Mammary epithelial cell (primary cell): ENCODE measurements at regions of chr21 and their contacts with region 1.

Region 1: DNA sequence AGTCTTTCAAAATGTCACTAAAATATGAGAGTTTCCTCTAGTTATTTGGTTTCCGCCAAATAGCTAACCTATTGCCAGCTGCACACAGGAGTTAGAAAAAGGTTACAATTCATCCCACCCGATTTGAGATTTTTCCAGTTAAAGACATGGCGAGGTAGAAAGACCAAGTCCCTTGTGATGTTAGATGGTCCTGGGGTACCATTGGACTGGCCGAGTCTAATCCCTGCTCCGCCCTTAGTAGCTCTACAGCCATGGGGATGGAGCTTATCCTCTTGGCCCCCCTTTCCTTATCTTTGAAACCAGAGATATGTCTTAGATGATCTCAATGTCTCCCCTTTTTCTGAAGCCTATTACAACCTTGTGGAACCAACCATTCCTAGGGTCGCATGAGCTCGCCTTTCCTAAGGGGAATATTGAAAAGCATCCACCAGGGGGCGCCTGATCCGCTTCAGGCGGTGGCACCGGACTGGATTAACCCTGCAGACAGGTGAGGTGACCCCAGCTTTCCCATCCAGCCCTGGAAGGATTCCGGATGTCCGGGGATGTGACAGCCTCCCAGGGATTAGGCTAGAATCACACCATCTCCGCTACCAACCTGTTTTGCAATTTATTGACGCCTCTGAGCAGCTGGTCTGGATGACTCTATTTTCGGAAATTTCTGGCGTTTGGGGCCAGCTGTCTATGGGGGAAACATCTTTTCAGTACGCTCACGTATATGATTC is 68.3 kb upstream of the SIM2 start:
- DNase-seq: peak; percentile 12
- H3K4me3 ChIP-seq: no peak overlapping the region
- H3K27ac ChIP-seq: no peak overlapping the region
- H3K4me1 ChIP-seq: peaks cover 3% of the 10 kb centered on the region
- H3K27me3 ChIP-seq: peaks cover 2% of the 10 kb centered on the region
- CTCF ChIP-seq: peak; percentile 67 to 74

Region 2: DNA sequence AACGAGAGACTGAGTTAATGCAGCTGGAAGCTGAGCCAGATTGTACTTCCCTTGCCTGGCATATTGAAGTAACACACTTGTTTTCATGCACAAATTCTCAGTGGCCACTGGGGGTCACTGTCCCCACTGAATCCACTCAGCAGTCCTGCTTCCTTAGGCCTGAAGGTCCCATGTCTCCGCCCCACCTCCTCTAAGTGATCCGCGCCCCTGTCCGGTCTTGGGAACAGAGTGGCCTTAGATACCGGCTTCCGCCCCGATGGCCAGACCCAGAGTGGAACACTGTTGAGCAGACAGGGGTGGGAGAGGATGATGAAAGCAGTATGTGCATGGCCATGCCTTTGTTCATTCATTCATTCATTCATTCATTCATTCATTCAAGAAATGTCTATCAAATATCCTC is 210.7 kb before region 1 on chr21:
- CTCF ChIA-PET with region 1: no interaction called
- dilution Hi-C with region 1: no loop called
- in situ Hi-C with region 1: no loop called
- intact Hi-C with region 1: loop called (anchors 2 kb)
- DNase-seq: peak; percentile 66
- H3K4me3 ChIP-seq: no peak overlapping the region
- H3K27ac ChIP-seq: no peak overlapping the region
- H3K4me1 ChIP-seq: no peaks in the 10 kb centered on the region
- H3K27me3 ChIP-seq: no peaks in the 10 kb centered on the region
- CTCF ChIP-seq: peak; percentile 80 to 84

Region 3: DNA sequence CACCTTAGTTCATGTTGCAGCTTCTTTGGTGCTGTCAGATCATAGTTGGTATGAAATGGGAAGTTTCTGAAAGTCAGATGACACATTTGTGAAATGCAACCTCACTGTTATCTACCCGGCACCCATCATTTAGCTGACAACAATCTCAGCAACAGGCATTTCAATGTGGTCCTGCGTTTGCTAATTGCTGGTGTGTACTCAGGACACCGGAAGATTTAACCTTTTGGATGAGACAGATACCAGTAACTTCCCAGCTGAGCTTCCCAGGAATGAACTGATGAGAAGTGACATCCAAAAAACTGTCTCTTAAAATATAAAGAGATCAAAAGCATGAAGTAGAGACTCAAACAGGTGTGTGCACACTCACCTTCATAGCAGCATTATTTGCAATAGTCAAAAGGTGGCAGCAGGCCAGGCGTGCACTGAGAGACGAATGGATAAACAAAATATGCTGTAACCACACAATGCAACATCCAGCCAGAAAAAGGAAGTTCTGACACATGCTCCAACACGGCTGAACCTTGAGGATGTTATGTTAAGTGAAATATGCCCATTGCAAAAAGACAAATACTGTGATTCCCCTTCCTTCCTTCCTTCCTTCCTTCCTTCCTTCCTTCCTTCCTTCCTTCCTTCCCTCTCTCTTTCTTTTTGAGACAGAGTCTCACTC is 142.9 kb before region 1 on chr21:
- CTCF ChIA-PET with region 1: no interaction called
- dilution Hi-C with region 1: no loop called
- in situ Hi-C with region 1: no loop called
- intact Hi-C with region 1: no loop called
- DNase-seq: peak; percentile 87
- H3K4me3 ChIP-seq: no peak overlapping the region
- H3K27ac ChIP-seq: no peak overlapping the region
- H3K4me1 ChIP-seq: no peaks in the 10 kb centered on the region
- H3K27me3 ChIP-seq: no peaks in the 10 kb centered on the region
- CTCF ChIP-seq: no peak

Region 4: GRCh38 chr21:36513430-36513829 is 117.2 kb before region 1 on chr21:
- CTCF ChIA-PET with region 1: no interaction called
- dilution Hi-C with region 1: no loop called
- in situ Hi-C with region 1: no loop called
- intact Hi-C with region 1: no loop called
- DNase-seq: no peak
- H3K4me3 ChIP-seq: no peak overlapping the region
- H3K27ac ChIP-seq: no peak overlapping the region
- H3K4me1 ChIP-seq: peaks cover 7% of the 10 kb centered on the region
- H3K27me3 ChIP-seq: no peaks in the 10 kb centered on the region
- CTCF ChIP-seq: no peak

Region 5: DNA sequence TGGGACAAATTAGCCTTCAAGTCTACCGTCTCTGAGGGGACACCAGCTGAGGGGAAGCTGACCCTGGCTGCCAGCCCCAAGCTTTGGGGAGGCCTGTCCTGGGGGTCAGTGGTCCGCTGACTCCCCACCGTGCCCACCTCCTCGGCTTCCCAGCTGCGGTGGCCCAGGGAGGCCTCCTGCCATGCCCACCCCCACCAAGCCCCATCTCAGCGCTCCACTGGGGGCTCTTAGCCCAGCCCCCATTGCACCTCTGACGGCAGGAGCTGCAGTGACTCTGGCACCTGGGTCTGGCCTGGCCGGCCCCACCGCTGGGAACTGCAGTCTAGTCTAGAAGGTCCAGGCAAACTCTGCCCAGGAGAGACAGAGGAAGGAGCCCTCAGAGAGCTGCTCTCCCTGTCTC is 38.1 kb after region 1 on chr21:
- CTCF ChIA-PET with region 1: no interaction called
- dilution Hi-C with region 1: loop called (anchors 5 kb)
- in situ Hi-C with region 1: no loop called
- intact Hi-C with region 1: no loop called
- DNase-seq: no peak
- H3K4me3 ChIP-seq: no peak overlapping the region
- H3K27ac ChIP-seq: no peak overlapping the region
- H3K4me1 ChIP-seq: no peaks in the 10 kb centered on the region
- H3K27me3 ChIP-seq: peaks cover 4% of the 10 kb centered on the region
- CTCF ChIP-seq: no peak

Region 6: DNA sequence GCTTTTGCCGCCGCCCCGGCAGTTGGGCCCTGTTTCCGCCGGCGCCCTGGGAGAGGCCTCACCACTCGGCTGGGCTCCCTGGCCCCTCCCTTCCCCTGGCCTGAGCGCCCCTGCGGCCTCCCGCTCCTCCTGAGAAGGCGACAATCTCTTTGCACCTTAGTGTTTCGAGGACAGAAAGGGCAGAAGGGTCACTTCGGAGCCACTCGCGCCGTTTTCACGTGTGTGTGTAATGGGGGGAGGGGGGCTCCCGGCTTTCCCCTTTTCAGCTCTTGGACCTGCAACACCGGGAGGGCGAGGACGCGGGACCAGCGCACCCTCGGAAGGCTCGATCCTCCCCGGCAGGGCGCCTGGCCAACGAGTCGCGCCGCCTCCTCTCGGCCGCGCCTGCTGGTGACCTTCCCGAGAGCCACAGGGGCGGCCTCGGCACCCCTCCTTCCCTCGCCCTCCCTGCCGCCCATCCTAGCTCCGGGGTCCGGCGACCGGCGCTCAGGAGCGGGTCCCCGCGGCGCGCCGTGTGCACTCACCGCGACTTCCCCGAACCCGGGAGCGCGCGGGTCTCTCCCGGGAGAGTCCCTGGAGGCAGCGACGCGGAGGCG is 67.8 kb after region 1 on chr21:
- CTCF ChIA-PET with region 1: no interaction called
- dilution Hi-C with region 1: no loop called
- in situ Hi-C with region 1: no loop called
- intact Hi-C with region 1: no loop called
- DNase-seq: no peak
- H3K4me3 ChIP-seq: no peak overlapping the region
- H3K27ac ChIP-seq: no peak overlapping the region
- H3K4me1 ChIP-seq: peaks cover 24% of the 10 kb centered on the region
- H3K27me3 ChIP-seq: peaks cover 93% of the 10 kb centered on the region
- CTCF ChIP-seq: no peak

Region 7: GRCh38 chr21:36719614-36720013 is 89.0 kb after region 1 on chr21:
- CTCF ChIA-PET with region 1: no interaction called
- dilution Hi-C with region 1: loop called (anchors 5 kb)
- in situ Hi-C with region 1: no loop called
- intact Hi-C with region 1: no loop called
- DNase-seq: no peak
- H3K4me3 ChIP-seq: no peak overlapping the region
- H3K27ac ChIP-seq: peak overlapping the region; percentile 48
- H3K4me1 ChIP-seq: peaks cover 12% of the 10 kb centered on the region
- H3K27me3 ChIP-seq: no peaks in the 10 kb centered on the region
- CTCF ChIP-seq: no peak

Region 8: GRCh38 chr21:36854391-36854790 is 223.7 kb after region 1 on chr21:
- CTCF ChIA-PET with region 1: no interaction called
- dilution Hi-C with region 1: no loop called
- in situ Hi-C with region 1: no loop called
- intact Hi-C with region 1: loop called (anchors 1 kb)
- DNase-seq: no peak
- H3K4me3 ChIP-seq: no peak overlapping the region
- H3K27ac ChIP-seq: no peak overlapping the region
- H3K4me1 ChIP-seq: no peaks in the 10 kb centered on the region
- H3K27me3 ChIP-seq: no peaks in the 10 kb centered on the region
- CTCF ChIP-seq: peak; percentile 45 to 57

Region 9: DNA sequence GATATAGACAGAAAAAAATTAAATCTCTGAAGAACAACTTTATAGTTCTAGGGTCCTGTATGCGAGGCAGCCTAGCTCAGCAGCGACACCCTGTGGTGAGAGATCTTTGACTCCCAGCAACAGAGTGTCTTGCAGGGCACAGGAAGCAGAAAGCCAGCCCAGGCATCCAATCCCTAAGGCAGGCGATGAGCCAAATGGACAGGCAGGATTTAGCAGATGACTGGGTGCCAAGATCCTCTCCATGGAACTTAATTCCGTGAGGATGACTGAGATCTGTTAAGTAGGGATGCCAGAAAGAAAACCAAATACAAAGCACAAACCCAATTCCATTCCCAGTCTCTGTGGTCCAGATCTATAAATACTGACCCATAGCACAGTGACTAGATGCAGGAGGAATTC is 297.1 kb after region 1 on chr21:
- CTCF ChIA-PET with region 1: no interaction called
- dilution Hi-C with region 1: no loop called
- in situ Hi-C with region 1: loop called (anchors 5 to 10 kb)
- intact Hi-C with region 1: loop called (anchors 1 kb)
- DNase-seq: peak; percentile 60
- H3K4me3 ChIP-seq: no peak overlapping the region
- H3K27ac ChIP-seq: no peak overlapping the region
- H3K4me1 ChIP-seq: peaks cover 10% of the 10 kb centered on the region
- H3K27me3 ChIP-seq: no peaks in the 10 kb centered on the region
- CTCF ChIP-seq: peak; percentile 94 to 96